GM13976 (cell line): ENCODE measurements at regions of chr2 and their contacts with region 1.

Region 1: DNA sequence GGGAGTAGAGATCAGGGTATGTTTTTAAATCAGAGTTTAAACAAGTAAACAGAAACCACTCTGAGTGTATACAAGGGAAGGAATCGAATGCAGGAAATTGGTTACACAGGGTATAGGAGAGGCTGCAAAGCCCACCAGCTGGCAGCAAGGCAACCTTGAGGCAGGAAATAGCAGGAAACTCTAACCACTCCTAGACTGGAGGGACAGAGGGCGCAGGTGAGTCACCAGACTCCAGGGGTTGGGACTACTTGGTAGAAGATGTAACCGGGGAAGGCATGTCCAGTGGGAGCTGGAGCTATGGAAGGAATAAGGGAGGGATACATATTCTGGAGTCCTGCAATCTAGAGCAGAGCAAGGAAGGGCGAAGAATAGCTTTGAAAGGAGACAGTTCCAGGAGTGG is 152.3 kb downstream of the MEIS1 start:
- DNase-seq: no peak
- CTCF ChIP-seq: no peak

Region 2: GRCh38 chr2:66445925-66446860 is 141.0 kb before region 1 on chr2:
- in situ Hi-C with region 1: loop called (anchors 10 kb)
- DNase-seq: no peak
- CTCF ChIP-seq: no peak

Region 3: GRCh38 chr2:66481100-66481549 is 106.1 kb before region 1 on chr2:
- in situ Hi-C with region 1: no loop called
- DNase-seq: no peak
- CTCF ChIP-seq: no peak